Activated CD4-positive, alpha-beta T cell treated with anti-CD3 and anti-CD28 coated beads for 36 hours (primary cell): ENCODE measurements at regions of chr20 and their contacts with region 1.

Region 1: GRCh38 chr20:45963059-45964005 is 8.7 kb downstream of the ZNF335 start:
- DNase-seq: no peak
- ATAC-seq: peak; percentile 37
- H3K4me3 Mint-ChIP-seq: no peak overlapping the region
- H3K27ac Mint-ChIP-seq: no peak overlapping the region
- H3K4me1 Mint-ChIP-seq: peaks cover 7% of the 10 kb centered on the region
- H3K27me3 Mint-ChIP-seq: no peaks in the 10 kb centered on the region

Region 2: GRCh38 chr20:45798935-45799642 is 164.2 kb before region 1 on chr20:
- CTCF ChIA-PET with region 1: interaction called, 11 read pairs
- POLR2A ChIA-PET with region 1: interaction called, 3 read pairs
- intact Hi-C with region 1: loop called (anchors 1 to 2 kb)
- DNase-seq: peak; percentile 79
- ATAC-seq: peak; percentile 95
- H3K4me3 Mint-ChIP-seq: no peak overlapping the region
- H3K27ac Mint-ChIP-seq: peak overlapping the region; percentile 45
- H3K4me1 Mint-ChIP-seq: peaks cover 7% of the 10 kb centered on the region
- H3K27me3 Mint-ChIP-seq: no peaks in the 10 kb centered on the region

Region 3: GRCh38 chr20:45823949-45824835 is 139.1 kb before region 1 on chr20:
- CTCF ChIA-PET with region 1: interaction called, 6 read pairs
- POLR2A ChIA-PET with region 1: interaction called, 11 read pairs
- intact Hi-C with region 1: loop called in 1 of 2 experiments (anchors 1 kb)
- DNase-seq: peak; percentile 77
- ATAC-seq: peak; percentile 90
- H3K4me3 Mint-ChIP-seq: peak overlapping the region; percentile 54
- H3K27ac Mint-ChIP-seq: peak overlapping the region; percentile 61
- H3K4me1 Mint-ChIP-seq: peaks cover 9% of the 10 kb centered on the region
- H3K27me3 Mint-ChIP-seq: peaks cover 33% of the 10 kb centered on the region